H1 (cell line): ENCODE measurements at regions of chr5 and their contacts with region 1.

Region 1: DNA sequence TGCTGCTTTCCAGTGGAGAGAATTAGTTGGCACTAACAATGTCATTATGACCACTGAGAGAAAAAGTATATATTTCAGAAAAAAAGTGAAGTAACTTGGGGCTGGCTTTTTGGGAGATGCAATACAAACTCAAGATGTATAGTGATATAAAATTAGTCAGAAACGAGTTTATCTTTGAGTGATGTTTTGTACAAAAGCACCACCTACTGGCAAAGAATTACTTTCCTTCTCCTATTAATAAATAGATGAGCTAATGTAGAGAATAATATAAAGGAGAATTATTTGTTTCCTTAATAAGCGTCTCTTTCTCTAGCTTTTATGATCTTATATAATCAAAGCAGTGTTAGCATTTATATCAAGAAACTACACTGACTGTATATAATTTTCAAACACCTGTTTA is 158.8 kb downstream of the MEF2C start:
- DNase-seq: no peak
- H3K4me3 ChIP-seq: no peak overlapping the region
- H3K27ac ChIP-seq: no peak overlapping the region
- H3K4me1 ChIP-seq: peaks cover 2 to 3% (median 3%) of the 10 kb centered on the region in 4 experiments; a peak in 6 of 7 replicates
- H3K27me3 ChIP-seq: peaks cover 0 to 2% (median 0%) of the 10 kb centered on the region in 4 experiments; a peak in 1 of 7 replicates
- CTCF ChIP-seq: no peak; a peak in 1 of 4 replicates
- EP300 ChIP-seq: no peak
- POLR2A ChIP-seq: no peak
- RAD21 ChIP-seq: peak; percentile 47

Region 2: DNA sequence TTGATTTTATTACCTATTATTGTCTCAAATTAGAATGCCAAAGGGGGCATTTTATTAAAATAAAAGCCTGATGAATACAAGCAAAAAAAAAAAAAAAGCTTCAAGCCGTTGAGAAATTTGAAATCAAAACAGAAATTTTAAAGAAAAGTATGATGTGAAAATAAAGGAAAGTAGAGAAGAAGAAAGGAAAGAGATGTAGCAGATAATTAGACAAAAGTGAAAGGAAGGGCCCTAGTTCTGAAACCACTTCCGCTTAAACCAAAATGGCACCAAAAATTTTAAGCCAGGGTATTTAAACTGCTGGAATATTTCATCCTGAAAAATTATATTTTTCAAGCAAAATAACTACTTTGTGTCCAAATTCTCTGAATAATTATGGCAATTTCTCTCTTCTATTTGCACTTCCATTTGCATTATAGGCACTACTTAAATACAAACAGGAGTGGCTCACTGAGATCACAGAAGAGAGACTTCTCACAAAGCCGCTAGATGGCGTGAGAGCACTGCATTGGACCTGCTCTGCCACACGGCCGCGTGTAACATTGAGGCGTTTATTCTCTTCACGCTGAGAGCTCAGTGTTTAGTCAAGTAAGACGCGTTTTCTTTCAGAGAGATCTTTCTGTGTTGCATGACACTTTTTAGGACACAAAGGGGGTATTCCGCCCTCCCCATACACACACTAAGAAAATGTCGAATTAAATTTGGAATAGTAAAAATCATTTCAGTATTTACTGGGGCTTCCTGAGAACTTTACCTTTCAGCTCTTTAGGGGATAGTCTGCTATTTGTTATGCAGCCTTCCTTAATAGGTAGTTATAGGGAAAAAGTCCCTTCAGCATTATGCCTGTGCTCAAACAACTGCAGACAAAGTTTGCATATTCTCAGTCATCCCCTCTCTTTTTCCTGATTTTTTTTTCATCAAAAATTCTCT is 943.1 kb before region 1 on chr5:
- CTCF ChIA-PET with region 1: interaction called, 13 read pairs
- POLR2A ChIA-PET with region 1: no interaction called
- DNase-seq: peak; percentile 57 to 77
- H3K4me3 ChIP-seq: peak overlapping the region in 1 of 4 experiments; percentile 47; a peak in 3 of 8 replicates
- H3K27ac ChIP-seq: no peak overlapping the region
- H3K4me1 ChIP-seq: no peaks in the 10 kb centered on the region; a peak in 1 of 7 replicates
- H3K27me3 ChIP-seq: peaks cover 2 to 9% (median 4%) of the 10 kb centered on the region in 4 experiments; a peak in 4 of 7 replicates
- CTCF ChIP-seq: peak; percentile 74 to 88 (median 86)
- EP300 ChIP-seq: no peak
- POLR2A ChIP-seq: no peak
- RAD21 ChIP-seq: peak; percentile 99

Region 3: DNA sequence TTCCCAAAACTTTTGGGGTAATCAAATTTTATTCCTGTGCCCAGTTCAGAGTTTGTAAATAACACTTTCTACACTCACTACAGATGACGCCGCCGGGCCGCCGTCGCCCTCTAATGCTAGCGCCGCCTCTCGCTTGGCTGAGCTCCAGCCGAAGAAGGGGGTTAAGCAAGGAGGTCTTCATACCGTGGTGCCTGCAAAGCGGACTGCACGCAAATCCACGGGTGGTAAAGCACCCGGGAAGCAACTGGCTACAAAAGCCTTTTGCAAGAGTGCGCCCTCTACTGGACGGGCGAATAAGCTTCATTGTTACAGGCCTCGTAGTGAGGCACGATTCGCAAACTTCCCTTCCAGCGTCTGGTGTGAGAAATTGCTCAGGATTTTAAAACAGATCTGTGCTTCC is 121.6 kb before region 1 on chr5:
- CTCF ChIA-PET with region 1: no interaction called
- POLR2A ChIA-PET with region 1: no interaction called
- DNase-seq: peak; percentile 7 to 81
- H3K4me3 ChIP-seq: no peak overlapping the region
- H3K27ac ChIP-seq: no peak overlapping the region
- H3K4me1 ChIP-seq: no peaks in the 10 kb centered on the region
- H3K27me3 ChIP-seq: no peaks in the 10 kb centered on the region
- CTCF ChIP-seq: peak; percentile 47 to 71 (median 70)
- EP300 ChIP-seq: no peak
- POLR2A ChIP-seq: no peak
- RAD21 ChIP-seq: peak; percentile 48 to 54

Region 4: GRCh38 chr5:88702328-88702727 is 21.9 kb before region 1 on chr5:
- CTCF ChIA-PET with region 1: interaction called, 53 read pairs
- POLR2A ChIA-PET with region 1: no interaction called
- DNase-seq: no peak
- H3K4me3 ChIP-seq: peak overlapping the region in 1 of 4 experiments; percentile 9; a peak in 1 of 8 replicates
- H3K27ac ChIP-seq: no peak overlapping the region
- H3K4me1 ChIP-seq: peaks cover 0 to 7% (median 2%) of the 10 kb centered on the region in 4 experiments; a peak in 5 of 7 replicates
- H3K27me3 ChIP-seq: no peaks in the 10 kb centered on the region
- CTCF ChIP-seq: no peak
- EP300 ChIP-seq: no peak
- POLR2A ChIP-seq: no peak
- RAD21 ChIP-seq: no peak